Panc1 (cell line): ENCODE measurements at regions of chr17 and their contacts with region 1.

Region 1: DNA sequence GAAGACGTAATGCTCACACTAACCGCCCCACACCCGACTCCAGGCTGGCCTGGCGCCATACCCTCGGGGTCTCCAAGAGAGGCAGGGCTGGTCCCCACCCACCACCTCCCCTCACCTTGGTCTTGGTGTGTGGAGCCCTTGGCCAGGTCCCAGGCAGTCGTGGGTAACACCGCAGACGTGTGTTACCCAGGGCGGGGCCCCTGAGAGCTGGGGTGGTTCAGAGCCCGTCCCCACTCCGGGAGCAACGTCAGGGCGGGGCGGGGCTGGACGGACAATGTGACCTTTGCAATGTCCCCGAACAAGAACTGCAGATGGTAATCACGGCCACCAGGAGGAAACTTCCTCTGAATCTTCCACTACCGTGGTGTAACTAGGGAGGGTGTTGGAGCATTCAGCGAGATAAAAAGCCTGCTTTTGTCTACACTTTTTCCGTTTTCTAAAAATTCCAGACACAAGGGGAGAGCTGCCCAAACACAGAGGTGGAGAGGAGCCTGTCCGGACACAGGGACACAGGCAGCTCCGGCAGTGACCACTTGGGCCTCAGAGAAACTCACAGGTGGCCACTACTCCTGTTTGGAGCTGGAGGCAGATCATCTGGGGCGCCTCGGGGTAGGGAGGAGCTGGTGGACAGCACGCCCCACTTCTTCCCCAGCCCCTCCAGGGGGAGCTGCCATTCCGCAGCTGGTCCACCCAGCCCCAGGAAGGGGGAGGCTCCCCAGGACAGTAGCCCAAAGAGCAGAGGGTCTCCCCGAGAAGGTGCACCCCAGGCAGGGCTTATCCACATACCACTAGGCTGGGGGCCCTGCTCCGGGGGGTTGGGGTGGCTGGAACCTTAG is 14.2 kb upstream of the SLC38A10 start:
- DNase-seq: no peak
- ATAC-seq: peak; percentile 87
- H3K4me3 ChIP-seq: peak overlapping the region; percentile 30 to 54
- H3K27ac ChIP-seq: peak overlapping the region; percentile 87
- H3K4me1 ChIP-seq: peaks cover 15% of the 10 kb centered on the region
- H3K27me3 ChIP-seq: no peaks in the 10 kb centered on the region
- CTCF ChIP-seq: no peak

Region 2: DNA sequence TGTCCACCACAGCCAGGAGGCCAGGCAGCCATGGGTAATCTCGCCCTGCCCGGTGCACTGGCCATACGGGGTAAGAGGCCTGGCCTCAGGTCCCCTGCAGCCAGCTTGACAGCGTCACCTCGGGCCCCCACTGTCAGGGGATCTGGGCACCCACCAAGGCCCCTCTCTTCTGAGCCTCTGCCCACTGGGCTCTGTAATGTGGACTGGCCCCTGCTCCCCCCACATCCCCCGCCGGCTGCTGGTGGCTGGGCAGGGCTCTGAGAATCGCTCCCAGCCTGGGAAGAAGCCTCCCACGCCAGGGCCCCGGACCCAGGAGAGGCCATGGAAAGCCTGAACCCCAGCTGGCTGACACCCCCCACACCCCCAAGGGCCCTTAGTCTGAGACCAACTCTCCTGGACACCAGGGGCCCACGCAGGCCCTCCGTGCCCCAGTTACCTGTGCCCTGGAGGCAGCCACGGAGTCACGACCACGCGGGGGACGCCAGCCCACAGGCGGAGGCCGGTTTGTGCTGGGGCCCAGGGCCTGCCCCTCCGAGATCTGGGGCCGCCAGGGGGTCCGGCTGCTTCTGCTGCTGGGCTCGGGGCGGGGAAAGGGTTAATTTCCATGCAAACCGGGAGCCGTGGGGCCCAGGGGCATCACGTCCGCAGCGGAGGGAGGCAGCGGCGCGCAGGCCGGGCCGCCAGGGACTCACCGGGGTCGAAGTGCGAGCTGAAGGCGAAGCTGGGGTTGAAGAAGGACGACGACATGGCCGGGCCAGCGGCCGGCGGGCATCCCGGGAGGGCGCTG is 143.8 kb before region 1 on chr17 and contains the start of gene PVALEF:
- CTCF ChIA-PET with region 1: no interaction called
- POLR2A ChIA-PET with region 1: no interaction called
- in situ Hi-C with region 1: no loop called
- intact Hi-C with region 1: no loop called
- DNase-seq: no peak
- ATAC-seq: peak; percentile 61
- H3K4me3 ChIP-seq: peak within 1 kb of the TSS; percentile 35 to 51
- H3K27ac ChIP-seq: peak within 1 kb of the TSS; percentile 45
- H3K4me1 ChIP-seq: peaks cover 16% of the 10 kb centered on the region
- H3K27me3 ChIP-seq: no peaks in the 10 kb centered on the region
- CTCF ChIP-seq: no peak
- total RNA-seq, gene PVALEF: not detected

Region 3: DNA sequence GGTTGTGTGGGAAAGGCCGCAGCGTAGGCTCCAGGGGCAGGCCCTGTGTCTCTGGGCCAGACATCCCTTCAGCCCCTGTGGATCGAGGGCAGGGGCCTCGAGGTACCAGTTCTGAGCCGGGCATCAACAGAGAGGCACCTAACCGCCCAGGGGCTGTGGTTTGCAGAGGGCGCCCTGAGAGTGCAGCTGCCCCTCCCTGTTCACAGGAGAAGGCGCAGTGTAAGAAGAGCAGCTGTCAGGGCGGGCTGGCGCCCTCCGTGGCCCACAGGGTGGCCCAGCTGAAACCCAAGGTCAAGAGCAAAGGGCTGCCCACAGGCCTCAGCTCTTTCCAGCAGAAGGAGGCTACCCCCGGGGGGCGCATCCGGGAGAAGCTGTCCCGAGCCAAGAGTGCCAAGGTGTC is 146.8 kb after region 1 on chr17:
- CTCF ChIA-PET with region 1: no interaction called
- POLR2A ChIA-PET with region 1: interaction called, 11 read pairs
- in situ Hi-C with region 1: no loop called
- intact Hi-C with region 1: no loop called
- DNase-seq: no peak
- ATAC-seq: no peak
- H3K4me3 ChIP-seq: no peak overlapping the region
- H3K27ac ChIP-seq: no peak overlapping the region
- H3K4me1 ChIP-seq: peaks cover 4% of the 10 kb centered on the region
- H3K27me3 ChIP-seq: no peaks in the 10 kb centered on the region
- CTCF ChIP-seq: no peak